Activated B cell treated with CpG ODN at 0.5 μM for 24 hours (primary cell): ENCODE measurements at regions of chr18 and their contacts with region 1.

Region 1: GRCh38 chr18:80108728-80109675 is at the start of gene ADNP2:
- DNase-seq: peak; percentile 63
- ATAC-seq: peak; percentile 66
- H3K4me3 Mint-ChIP-seq: peak within 1 kb of the TSS; percentile 84
- H3K27ac Mint-ChIP-seq: peak within 1 kb of the TSS; percentile 80
- H3K4me1 Mint-ChIP-seq: peaks cover 45% of the 10 kb centered on the region
- H3K27me3 Mint-ChIP-seq: no peaks in the 10 kb centered on the region
- CTCF ChIP-seq: no peak
- total RNA-seq, gene ADNP2: 19.2 and 19.7 TPM in 2 replicates

Region 2: DNA sequence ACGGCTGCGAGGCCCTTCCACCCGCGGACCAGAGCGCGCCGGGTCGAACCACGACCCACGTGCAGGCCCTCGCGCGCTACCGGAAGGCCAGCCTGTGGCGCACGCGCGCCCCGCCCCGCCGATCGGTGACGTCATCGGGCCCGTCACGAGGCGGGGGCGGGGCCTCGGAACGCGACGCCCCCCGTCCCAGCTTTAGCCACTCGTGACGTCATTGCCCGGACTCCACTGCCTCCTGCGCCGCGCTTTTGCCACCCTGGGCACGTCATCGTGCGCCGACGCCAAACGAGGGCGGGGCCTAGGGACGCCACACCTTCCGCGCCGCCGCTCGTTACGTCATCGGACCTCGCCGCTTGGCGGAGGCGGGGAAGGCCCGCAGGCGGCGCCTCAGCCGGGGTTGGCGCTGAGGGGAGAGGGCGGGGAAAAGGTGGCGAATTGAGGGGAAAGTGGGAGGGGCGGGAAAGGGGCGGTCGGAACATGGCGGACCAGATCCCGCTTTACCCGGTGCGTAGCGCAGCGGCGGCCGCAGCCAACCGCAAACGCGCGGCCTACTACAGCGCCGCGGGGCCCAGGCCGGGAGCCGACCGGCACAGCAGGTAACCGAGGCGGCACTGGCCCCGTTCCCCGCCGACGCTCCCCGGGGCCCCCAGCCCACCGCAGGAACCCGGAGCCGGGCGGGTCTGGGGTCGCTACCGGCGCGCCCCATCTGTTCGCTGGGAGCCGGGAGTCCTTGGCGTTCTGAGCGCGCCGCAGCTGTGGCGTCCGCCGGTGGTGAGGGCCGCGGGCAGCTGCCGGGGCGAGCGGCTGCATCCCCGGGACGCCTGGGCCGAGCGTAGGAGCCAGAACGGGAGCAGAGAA is 1039.8 kb before region 1 on chr18 and contains the start of gene ATP9B:
- CTCF ChIA-PET with region 1: no interaction called
- POLR2A ChIA-PET with region 1: no interaction called
- intact Hi-C with region 1: loop called (anchors 5 kb)
- DNase-seq: peak; percentile 99
- ATAC-seq: peak; percentile 84
- H3K4me3 Mint-ChIP-seq: peak within 1 kb of the TSS; percentile 88
- H3K27ac Mint-ChIP-seq: peak within 1 kb of the TSS; percentile 95
- H3K4me1 Mint-ChIP-seq: peaks cover 30% of the 10 kb centered on the region
- H3K27me3 Mint-ChIP-seq: peaks cover 3% of the 10 kb centered on the region
- CTCF ChIP-seq: no peak
- total RNA-seq, gene ATP9B: 41.5 and 49.2 TPM in 2 replicates

Region 3: GRCh38 chr18:79749251-79750191 is 359.5 kb before region 1 on chr18:
- CTCF ChIA-PET with region 1: no interaction called
- POLR2A ChIA-PET with region 1: no interaction called
- intact Hi-C with region 1: no loop called
- DNase-seq: no peak
- ATAC-seq: no peak
- H3K4me3 Mint-ChIP-seq: no peak overlapping the region
- H3K27ac Mint-ChIP-seq: no peak overlapping the region
- H3K4me1 Mint-ChIP-seq: no peaks in the 10 kb centered on the region
- H3K27me3 Mint-ChIP-seq: no peaks in the 10 kb centered on the region
- CTCF ChIP-seq: no peak